ENCODE measurements at regions of chr7 and their contacts with region 1.

Region 1: GRCh38 chr7:28272461-28272877 is 91.9 kb upstream of the JAZF1 start:
- DNase-seq: peak; percentile 68
- ATAC-seq: peak; percentile 96
- H3K4me3 ChIP-seq: no peak overlapping the region; the same call in 1 of the 2 replicates
- H3K27ac ChIP-seq: no peak overlapping the region
- H3K4me1 ChIP-seq: no peaks in the 10 kb centered on the region
- H3K27me3 ChIP-seq: no peaks in the 10 kb centered on the region; the same call in 1 of the 2 replicates
- CTCF ChIP-seq: peak; percentile 65
- POLR2A ChIP-seq: no peak
- RAD21 ChIP-seq: peak; percentile 63

Region 2: DNA sequence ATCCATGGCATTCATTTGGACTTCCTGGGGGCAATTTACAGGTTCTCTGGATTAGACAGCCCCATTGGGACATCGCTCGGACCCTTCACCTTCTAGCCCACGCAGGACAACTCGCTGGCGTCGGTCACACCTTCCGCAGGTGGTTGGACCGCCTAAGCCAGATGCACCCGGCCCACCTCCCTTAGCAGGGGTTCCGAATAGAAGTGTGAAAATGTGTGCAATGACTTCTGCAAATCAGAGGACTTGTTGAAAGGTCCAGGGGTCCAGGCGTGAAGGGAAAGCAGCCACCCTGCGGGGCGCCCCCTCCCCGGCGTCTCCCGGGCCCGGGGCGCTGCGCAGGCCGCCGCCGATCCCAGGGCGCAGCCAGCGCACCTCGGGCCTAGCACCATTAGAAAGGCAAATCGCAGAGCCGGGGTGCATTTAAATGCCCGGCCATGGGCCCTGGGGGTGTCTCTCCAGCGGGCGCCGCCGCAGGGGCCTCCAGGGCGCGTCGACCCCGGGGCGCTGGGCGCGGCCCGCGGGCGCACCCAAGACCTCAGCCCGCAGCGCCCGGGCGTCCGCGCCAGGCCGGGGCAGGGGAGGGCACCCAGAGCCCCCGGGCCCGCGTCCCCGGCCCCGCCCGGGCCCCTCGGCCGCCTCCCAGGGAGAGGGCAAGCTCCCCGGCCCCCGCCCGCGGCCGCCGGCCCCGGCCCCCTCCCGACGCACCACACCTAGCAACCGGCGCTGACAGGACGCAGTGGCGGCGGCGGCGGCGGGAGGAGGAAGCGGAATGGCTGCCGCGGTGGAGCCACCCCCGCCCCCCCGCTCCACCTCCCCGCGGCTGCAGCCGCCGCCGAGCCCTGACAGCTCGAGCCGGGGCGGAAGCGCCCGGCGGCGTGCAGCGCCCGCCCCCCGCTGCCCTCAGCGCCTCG is 93.1 kb before region 1 on chr7:
- CTCF ChIA-PET with region 1: no interaction called
- POLR2A ChIA-PET with region 1: no interaction called
- dilution Hi-C with region 1: no loop called
- in situ Hi-C with region 1: no loop called
- intact Hi-C with region 1: loop called (anchors 1 kb)
- DNase-seq: no peak
- ATAC-seq: peak; percentile 78
- H3K4me3 ChIP-seq: peak overlapping the region; percentile 100
- H3K27ac ChIP-seq: peak overlapping the region; percentile 70
- H3K4me1 ChIP-seq: peaks cover 23% of the 10 kb centered on the region
- H3K27me3 ChIP-seq: no peaks in the 10 kb centered on the region
- CTCF ChIP-seq: no peak
- POLR2A ChIP-seq: no peak
- RAD21 ChIP-seq: no peak

Measured in IMR-90 (cell line).